ENCODE measurements at regions of chr13 and their contacts with region 1.

Region 1: GRCh38 chr13:111407381-111408131 is 87.1 kb downstream of the TEX29 start:
- DNase-seq: no peak
- ATAC-seq: no peak
- H3K4me3 ChIP-seq: no peak overlapping the region
- H3K27ac ChIP-seq: no peak overlapping the region
- H3K4me1 ChIP-seq: no peaks in the 10 kb centered on the region
- H3K27me3 ChIP-seq: peaks cover 0 to 68% (median 9%) of the 10 kb centered on the region in 9 donors
- CTCF ChIP-seq: no peak
- POLR2A ChIP-seq: no peak

Region 2: GRCh38 chr13:111356795-111357194 is 50.8 kb before region 1 on chr13:
- intact Hi-C with region 1: loop called in 1 of 10 experiments (anchors 2 kb)
- DNase-seq: no peak
- ATAC-seq: no peak
- H3K4me3 ChIP-seq: no peak overlapping the region
- H3K27ac ChIP-seq: no peak overlapping the region
- H3K4me1 ChIP-seq: no peaks in the 10 kb centered on the region
- H3K27me3 ChIP-seq: peaks cover 0 to 10% (median 0%) of the 10 kb centered on the region in 9 donors
- CTCF ChIP-seq: no peak
- POLR2A ChIP-seq: no peak